ENCODE measurements at regions of chr10 and their contacts with region 1.

Region 1: DNA sequence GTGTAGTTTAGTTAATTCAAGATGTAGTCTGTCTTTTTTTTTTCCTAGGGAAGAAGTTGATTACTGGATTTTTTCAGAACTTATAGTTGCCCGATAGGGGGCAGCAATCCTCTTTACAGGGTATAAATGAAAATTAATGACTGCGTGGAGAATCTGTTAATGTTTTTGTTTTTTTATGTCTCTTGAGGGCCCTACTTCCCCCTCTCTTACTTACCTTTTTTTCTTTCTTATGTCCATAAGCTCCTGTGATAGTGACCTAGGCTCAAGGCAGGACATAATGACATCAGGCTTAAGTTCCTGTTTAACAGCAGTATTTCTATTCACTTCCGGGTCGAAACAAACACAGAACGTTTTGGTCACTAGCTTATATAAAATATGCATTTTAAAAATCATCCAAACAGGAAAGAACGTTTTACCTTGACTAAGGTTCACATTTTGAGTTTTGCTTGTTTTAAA is 18.8 kb downstream of the CDC123 start:
- DNase-seq: peak; percentile 67
- H3K4me3 Mint-ChIP-seq: peak overlapping the region; percentile 28
- H3K27ac Mint-ChIP-seq: peak overlapping the region; percentile 85
- H3K4me1 Mint-ChIP-seq: peaks cover 15% of the 10 kb centered on the region
- H3K27me3 Mint-ChIP-seq: no peaks in the 10 kb centered on the region

Region 2: DNA sequence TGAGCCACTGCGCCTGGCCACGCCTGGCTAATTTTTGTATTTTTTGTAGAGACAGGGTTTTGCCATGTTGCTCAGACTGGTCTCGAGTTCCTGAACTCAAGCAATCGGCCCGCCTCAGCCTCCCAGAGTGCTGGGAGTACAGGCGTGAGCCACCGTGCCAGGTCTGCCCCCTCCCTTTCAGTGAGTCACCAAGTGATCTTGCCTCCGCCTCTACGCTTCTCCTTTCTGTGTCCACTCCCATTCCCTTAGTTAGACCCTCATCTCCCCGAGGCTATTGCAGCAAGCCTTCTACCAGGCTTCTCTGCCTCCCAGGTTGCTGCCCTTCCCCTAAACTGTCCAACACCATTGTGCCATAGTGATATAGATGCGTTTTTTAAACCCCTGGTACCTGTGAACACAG is 14.1 kb after region 1 on chr10:
- CTCF ChIA-PET with region 1: interaction called, 10 read pairs
- POLR2A ChIA-PET with region 1: no interaction called
- DNase-seq: no peak
- H3K4me3 Mint-ChIP-seq: no peak overlapping the region
- H3K27ac Mint-ChIP-seq: no peak overlapping the region
- H3K4me1 Mint-ChIP-seq: no peaks in the 10 kb centered on the region
- H3K27me3 Mint-ChIP-seq: no peaks in the 10 kb centered on the region